HepG2 (cell line): ENCODE measurements at regions of chr4 and their contacts with region 1.

Region 1: DNA sequence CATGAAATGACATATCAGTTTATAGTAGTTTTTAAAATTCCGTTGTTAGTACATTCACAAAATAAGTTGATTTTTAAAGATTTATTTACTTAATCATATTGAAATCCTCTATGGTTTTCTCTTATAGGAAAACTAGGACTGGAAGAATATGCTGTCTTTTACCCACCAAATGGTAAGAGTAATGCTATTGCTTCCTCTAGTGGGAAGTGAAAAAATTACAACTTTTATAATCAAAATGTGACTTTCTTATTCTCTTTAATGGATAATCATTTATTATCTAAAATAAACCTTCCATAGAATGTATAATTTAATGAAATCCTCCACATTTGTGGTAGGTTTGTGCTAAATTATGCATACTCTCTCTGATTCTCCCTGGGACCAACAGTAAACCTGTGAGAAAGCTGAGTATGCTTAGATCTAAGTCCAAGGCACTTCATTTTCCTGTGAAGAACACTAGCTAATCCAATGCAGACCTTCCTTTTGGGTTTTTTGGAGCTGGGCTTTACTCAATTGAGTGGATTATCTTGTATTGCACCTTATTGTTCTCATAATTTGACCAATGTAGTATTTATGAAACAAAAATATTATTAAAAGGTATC is 136.2 kb downstream of the TBC1D19 start:
- DNase-seq: no peak
- ATAC-seq: no peak
- H3K4me3 ChIP-seq: no peak overlapping the region
- H3K27ac ChIP-seq: no peak overlapping the region
- H3K4me1 ChIP-seq: no peaks in the 10 kb centered on the region
- H3K27me3 ChIP-seq: no peaks in the 10 kb centered on the region
- CTCF ChIP-seq: peak; percentile 46
- EP300 ChIP-seq: no peak
- POLR2A ChIP-seq: no peak
- RAD21 ChIP-seq: no peak

Region 2: GRCh38 chr4:26116092-26116491 is 604.0 kb before region 1 on chr4:
- CTCF ChIA-PET with region 1: no interaction called
- POLR2A ChIA-PET with region 1: no interaction called
- in situ Hi-C with region 1: no loop called
- intact Hi-C with region 1: no loop called
- DNase-seq: no peak
- ATAC-seq: no peak
- H3K4me3 ChIP-seq: no peak overlapping the region
- H3K27ac ChIP-seq: no peak overlapping the region
- H3K4me1 ChIP-seq: peaks cover 32% of the 10 kb centered on the region
- H3K27me3 ChIP-seq: peaks cover 0 to 3% of the 10 kb centered on the region in 2 experiments; a peak in 2 of 5 replicates
- CTCF ChIP-seq: no peak
- EP300 ChIP-seq: no peak
- POLR2A ChIP-seq: no peak
- RAD21 ChIP-seq: no peak

Region 3: GRCh38 chr4:26330186-26330787 is 389.8 kb before region 1 on chr4:
- CTCF ChIA-PET with region 1: no interaction called
- POLR2A ChIA-PET with region 1: no interaction called
- in situ Hi-C with region 1: no loop called
- intact Hi-C with region 1: loop called (anchors 1 kb)
- DNase-seq: peak; percentile 64
- ATAC-seq: peak; percentile 91
- H3K4me3 ChIP-seq: no peak overlapping the region
- H3K27ac ChIP-seq: no peak overlapping the region
- H3K4me1 ChIP-seq: peaks cover 22% of the 10 kb centered on the region
- H3K27me3 ChIP-seq: no peaks in the 10 kb centered on the region
- CTCF ChIP-seq: peak; percentile 68
- EP300 ChIP-seq: no peak
- POLR2A ChIP-seq: no peak
- RAD21 ChIP-seq: no peak

Region 4: GRCh38 chr4:26459054-26459755 is 260.8 kb before region 1 on chr4:
- CTCF ChIA-PET with region 1: interaction called, 13 read pairs
- POLR2A ChIA-PET with region 1: no interaction called
- in situ Hi-C with region 1: loop called (anchors 10 kb)
- intact Hi-C with region 1: loop called (anchors 1 kb)
- DNase-seq: peak; percentile 58
- ATAC-seq: peak; percentile 78
- H3K4me3 ChIP-seq: peak overlapping the region in 1 of 3 experiments; percentile 13; a peak in 1 of 6 replicates
- H3K27ac ChIP-seq: no peak overlapping the region
- H3K4me1 ChIP-seq: peaks cover 23% of the 10 kb centered on the region
- H3K27me3 ChIP-seq: no peaks in the 10 kb centered on the region; a peak in 2 of 5 replicates
- CTCF ChIP-seq: peak; percentile 75
- EP300 ChIP-seq: no peak
- POLR2A ChIP-seq: no peak
- RAD21 ChIP-seq: peak; percentile 31; the same call in 1 of the 2 replicates